ENCODE measurements at regions of chr2 and their contacts with region 1.

Region 1: GRCh38 chr2:40412456-40412855 is 39.4 kb downstream of the SLC8A1 start:
- DNase-seq: no peak
- ATAC-seq: peak in 1 of 2 experiments; percentile 61; a peak in 4 of 6 replicates
- H3K4me3 ChIP-seq: no peak overlapping the region
- H3K27ac ChIP-seq: no peak overlapping the region
- H3K4me1 ChIP-seq: peaks cover 7% of the 10 kb centered on the region; the same call in 2 of the 3 replicates
- CTCF ChIP-seq: no peak
- EP300 ChIP-seq: no peak
- POLR2A ChIP-seq: no peak
- RAD21 ChIP-seq: no peak

Region 2: DNA sequence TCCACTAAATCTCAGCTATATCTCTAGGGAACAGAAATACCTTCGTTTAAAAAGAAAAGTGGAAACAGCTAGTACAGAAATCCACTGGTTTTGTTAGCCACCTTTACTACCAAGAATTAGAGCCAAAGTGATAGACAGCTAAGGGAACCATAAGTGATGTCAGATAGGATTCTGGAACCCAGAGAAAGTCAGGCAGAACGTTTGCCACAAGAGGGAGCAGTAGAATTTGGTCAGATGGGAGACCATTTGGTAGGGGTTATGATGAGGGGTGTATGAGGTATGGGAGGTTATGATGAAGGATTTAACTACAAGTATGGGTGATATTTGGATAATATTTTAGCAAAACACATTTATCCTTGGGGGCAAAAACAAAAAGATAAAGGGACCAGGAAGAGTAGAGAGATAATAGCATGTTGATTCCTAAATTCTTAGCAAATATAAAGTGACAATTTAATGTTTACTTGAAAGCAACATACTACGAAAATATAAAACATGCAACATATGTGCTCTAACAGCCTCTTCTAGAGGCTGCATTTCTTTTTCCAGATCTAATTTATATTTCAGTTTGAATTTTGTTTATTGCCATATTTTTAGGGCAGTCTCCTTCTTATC is 36.1 kb after region 1 on chr2:
- CTCF ChIA-PET with region 1: interaction called, 16 read pairs
- POLR2A ChIA-PET with region 1: no interaction called
- DNase-seq: peak; percentile 20 to 64
- ATAC-seq: peak in 1 of 2 experiments; percentile 55; a peak in 3 of 6 replicates
- H3K4me3 ChIP-seq: no peak overlapping the region
- H3K27ac ChIP-seq: no peak overlapping the region
- H3K4me1 ChIP-seq: peaks cover 13% of the 10 kb centered on the region; the same call in 1 of the 3 replicates
- CTCF ChIP-seq: peak; percentile 60
- EP300 ChIP-seq: no peak
- POLR2A ChIP-seq: no peak
- RAD21 ChIP-seq: peak; percentile 38 to 63; a peak in 4 of 5 replicates

Measured in A549 (cell line).